ENCODE measurements at regions of chr4 and their contacts with region 1.

Region 1: DNA sequence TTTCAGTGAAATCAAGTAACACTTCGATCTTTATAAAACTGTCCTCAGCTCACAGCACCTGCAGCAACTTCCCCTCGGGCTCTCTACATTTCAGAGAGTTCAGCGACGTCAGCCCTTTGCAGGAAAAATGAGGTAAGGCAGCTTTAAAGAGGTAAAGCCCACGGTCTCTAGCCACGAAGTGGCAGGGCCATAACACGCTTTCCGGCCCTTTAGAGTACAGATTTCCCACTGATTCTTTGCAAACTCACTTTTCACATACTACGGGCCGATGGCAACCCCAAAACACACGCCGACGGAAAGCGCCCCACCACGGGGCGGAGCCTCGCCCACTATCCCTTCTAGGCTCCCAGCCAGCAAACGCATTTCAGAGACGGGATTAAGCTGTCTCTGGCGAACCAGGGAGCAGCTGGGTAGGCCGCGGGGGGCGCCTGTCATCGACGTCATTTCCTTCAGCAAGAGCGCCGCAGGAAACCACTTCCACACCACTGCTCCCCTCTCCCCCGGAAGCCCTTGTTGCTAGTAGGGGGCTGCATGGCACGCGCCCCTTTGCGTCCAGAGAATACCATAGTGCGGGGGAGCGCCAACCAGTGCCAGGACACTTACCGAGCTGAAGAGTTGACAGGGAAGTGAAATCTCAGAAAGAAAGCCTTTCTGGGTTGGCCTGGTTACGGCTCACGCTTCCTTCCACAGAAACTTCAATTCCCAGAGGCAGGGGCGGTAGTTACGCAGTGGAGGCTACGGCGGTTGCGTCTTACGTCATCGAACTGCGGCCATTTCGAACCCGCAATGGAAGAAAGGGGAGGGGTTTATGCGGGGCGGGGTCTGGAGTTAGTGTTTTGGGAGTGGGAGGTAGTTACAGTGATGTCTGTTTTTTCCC is at the start of gene TRMT10A:
- DNase-seq: peak; percentile 81
- ATAC-seq: peak; percentile 99
- H3K4me3 ChIP-seq: peak within 1 kb of the TSS; percentile 71 to 88
- H3K27ac ChIP-seq: peak within 1 kb of the TSS; percentile 88
- H3K4me1 ChIP-seq: no peaks in the 10 kb centered on the region
- H3K27me3 ChIP-seq: no peaks in the 10 kb centered on the region
- CTCF ChIP-seq: no peak
- total RNA-seq, gene TRMT10A: 1.4 TPM

Region 2: GRCh38 chr4:99808260-99808857 is 244.8 kb after region 1 on chr4:
- CTCF ChIA-PET with region 1: no interaction called
- POLR2A ChIA-PET with region 1: no interaction called
- in situ Hi-C with region 1: no loop called
- intact Hi-C with region 1: loop called (anchors 1 kb)
- DNase-seq: no peak
- ATAC-seq: peak; percentile 76
- H3K4me3 ChIP-seq: no peak overlapping the region
- H3K27ac ChIP-seq: no peak overlapping the region
- H3K4me1 ChIP-seq: no peaks in the 10 kb centered on the region
- H3K27me3 ChIP-seq: no peaks in the 10 kb centered on the region; the same call in 1 of the 2 replicates
- CTCF ChIP-seq: peak; percentile 70

Region 3: DNA sequence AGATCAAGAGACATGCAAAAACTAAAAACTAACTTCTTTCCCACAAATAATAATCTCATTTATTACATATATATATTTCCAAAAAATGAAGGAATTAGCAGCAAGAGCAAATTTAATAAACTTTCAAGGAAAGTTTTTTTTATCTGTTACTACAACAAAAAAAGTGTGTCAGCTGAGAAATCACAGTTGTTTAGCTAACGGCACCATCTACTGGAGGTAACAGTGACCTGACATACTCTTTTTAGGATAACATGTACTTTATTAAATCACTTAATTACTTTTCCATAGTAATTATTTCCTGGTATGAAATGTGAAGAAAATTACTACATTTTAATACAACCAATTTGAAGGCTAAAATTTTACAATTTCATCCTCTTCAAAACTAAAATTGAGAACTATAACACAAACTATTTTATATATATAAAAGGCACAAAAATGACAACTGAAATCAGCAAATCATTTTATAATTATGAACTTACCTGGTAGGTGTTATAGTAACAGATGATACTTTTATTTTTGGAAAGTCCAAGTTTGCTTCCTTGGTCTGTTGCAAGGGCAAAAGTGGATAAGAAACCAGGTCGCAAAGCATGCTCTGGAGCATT is 321.6 kb after region 1 on chr4:
- CTCF ChIA-PET with region 1: no interaction called
- POLR2A ChIA-PET with region 1: no interaction called
- in situ Hi-C with region 1: no loop called
- intact Hi-C with region 1: loop called (anchors 5 kb)
- DNase-seq: no peak
- ATAC-seq: no peak
- H3K4me3 ChIP-seq: no peak overlapping the region
- H3K27ac ChIP-seq: no peak overlapping the region
- H3K4me1 ChIP-seq: no peaks in the 10 kb centered on the region
- H3K27me3 ChIP-seq: no peaks in the 10 kb centered on the region
- CTCF ChIP-seq: peak; percentile 38; the same call in 1 of the 2 replicates

Region 4: DNA sequence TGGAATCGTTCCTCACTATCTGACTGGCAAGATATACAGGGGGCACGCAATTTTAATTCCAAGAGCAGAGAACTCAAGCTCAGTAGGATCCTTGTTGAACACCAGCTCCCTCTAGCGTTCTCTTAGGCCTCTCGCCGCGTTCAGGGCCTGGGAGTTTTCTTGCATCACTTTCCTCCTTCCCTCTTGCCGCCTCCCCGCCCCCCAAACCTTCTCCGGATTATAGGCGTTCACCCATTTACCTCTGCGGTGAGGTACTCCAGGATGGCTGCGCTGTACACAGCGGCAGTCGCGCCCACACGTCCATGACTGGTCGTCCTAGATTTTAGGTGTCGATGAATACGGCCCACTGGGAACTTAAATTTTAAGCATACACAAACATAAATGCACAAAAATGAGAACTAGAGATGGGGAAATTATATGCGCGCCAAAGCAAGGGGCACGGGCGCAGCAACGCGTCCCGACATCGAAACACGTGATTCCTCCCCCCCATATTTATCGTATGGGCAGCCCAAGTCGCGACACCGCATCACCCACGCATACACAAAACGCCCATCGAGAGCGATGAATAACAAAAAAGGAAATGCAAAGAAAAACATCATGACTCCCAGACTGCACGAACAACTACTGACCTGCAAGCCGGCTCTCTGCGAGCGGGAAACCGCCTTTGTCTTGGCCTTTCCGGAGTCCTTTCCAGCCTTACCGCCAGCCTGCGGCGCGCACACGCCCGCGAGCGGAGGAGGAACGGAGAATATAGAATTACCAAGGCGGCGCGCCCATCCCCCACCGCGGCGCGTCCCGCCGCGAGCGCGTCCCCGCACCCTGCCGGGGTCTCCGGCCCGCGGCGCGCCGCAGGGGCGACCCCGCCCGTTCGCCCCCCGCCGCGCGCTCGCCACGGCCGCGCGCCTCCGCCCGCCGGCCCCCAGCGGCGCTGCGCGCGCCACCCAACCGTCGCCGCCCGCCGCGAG is 385.8 kb after region 1 on chr4:
- CTCF ChIA-PET with region 1: no interaction called
- POLR2A ChIA-PET with region 1: interaction called, 4 read pairs
- in situ Hi-C with region 1: no loop called
- intact Hi-C with region 1: loop called (anchors 5 kb)
- DNase-seq: peak; percentile 84
- ATAC-seq: peak; percentile 24; the same call in 1 of the 2 replicates
- H3K4me3 ChIP-seq: peak overlapping the region; percentile 90
- H3K27ac ChIP-seq: peak overlapping the region; percentile 85
- H3K4me1 ChIP-seq: peaks cover 11% of the 10 kb centered on the region
- H3K27me3 ChIP-seq: no peaks in the 10 kb centered on the region
- CTCF ChIP-seq: peak; percentile 85

Measured in Panc1 (cell line).